ENCODE measurements at regions of chr22 and their contacts with region 1.

Region 1: GRCh38 chr22:43031617-43032016 is 16.7 kb upstream of the PACSIN2 start:
- DNase-seq: no peak
- H3K4me3 ChIP-seq: no peak overlapping the region
- H3K27ac ChIP-seq: no peak overlapping the region
- H3K4me1 ChIP-seq: no peaks in the 10 kb centered on the region
- H3K27me3 ChIP-seq: no peaks in the 10 kb centered on the region
- CTCF ChIP-seq: no peak
- POLR2A ChIP-seq: no peak

Region 2: GRCh38 chr22:42994881-42995562 is 36.6 kb before region 1 on chr22:
- intact Hi-C with region 1: loop called (anchors 1 kb)
- DNase-seq: peak in 1 of 2 donors; percentile 83
- H3K4me3 ChIP-seq: peak overlapping the region in 2 of 3 donors; percentile 25 to 54
- H3K27ac ChIP-seq: peak overlapping the region; percentile 91 to 95
- H3K4me1 ChIP-seq: peaks cover 18 to 35% of the 10 kb centered on the region in 2 donors
- H3K27me3 ChIP-seq: no peaks in the 10 kb centered on the region
- CTCF ChIP-seq: no peak
- POLR2A ChIP-seq: peak; percentile 13

Region 3: DNA sequence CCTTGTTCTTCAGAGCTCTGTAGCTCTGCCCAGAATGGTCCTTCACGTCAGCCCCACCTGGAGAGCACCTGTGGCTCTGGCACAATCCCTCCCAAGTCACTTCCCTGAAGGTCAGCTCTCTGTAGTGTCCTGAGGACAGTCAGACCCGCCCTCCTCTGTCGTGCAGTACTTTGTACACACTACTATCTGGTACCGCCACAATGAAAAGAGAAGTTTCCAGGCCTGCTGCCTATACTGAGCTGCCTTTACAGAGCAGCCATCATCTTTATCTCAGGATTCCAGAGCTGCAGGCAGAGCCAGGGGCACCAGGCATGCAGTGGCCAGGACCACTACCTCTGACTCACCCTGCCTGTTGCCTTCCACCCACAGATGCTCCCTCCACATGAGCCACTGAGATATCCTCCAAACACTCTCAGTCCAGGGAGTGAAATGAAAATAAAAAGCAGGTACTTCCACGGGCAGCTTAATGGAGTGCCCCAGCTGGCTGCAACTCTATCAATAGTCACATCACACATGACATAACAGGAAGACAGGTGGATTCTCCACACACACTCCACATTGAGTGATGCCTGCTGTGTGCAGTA is 24.0 kb before region 1 on chr22:
- intact Hi-C with region 1: no loop called
- DNase-seq: no peak
- H3K4me3 ChIP-seq: no peak overlapping the region
- H3K27ac ChIP-seq: no peak overlapping the region
- H3K4me1 ChIP-seq: peaks cover 2 to 10% of the 10 kb centered on the region in 2 donors
- H3K27me3 ChIP-seq: no peaks in the 10 kb centered on the region
- CTCF ChIP-seq: no peak
- POLR2A ChIP-seq: no peak